CD4-positive, alpha-beta T cell (primary cell): ENCODE measurements at regions of chr2 and their contacts with region 1.

Region 1: GRCh38 chr2:156435715-156436496 is at the start of gene GPD2:
- DNase-seq: peak; percentile 25 to 77 (median 46)
- ATAC-seq: peak; percentile 63
- H3K4me3 ChIP-seq: peak within 1 kb of the TSS; percentile 80
- H3K4me3 Mint-ChIP-seq: peak within 1 kb of the TSS; percentile 96
- H3K27ac ChIP-seq: peak within 1 kb of the TSS; percentile 33 to 69
- H3K27ac Mint-ChIP-seq: peak within 1 kb of the TSS; percentile 95
- H3K4me1 ChIP-seq: peaks cover 28% of the 10 kb centered on the region
- H3K4me1 Mint-ChIP-seq: peaks cover 33% of the 10 kb centered on the region
- H3K27me3 ChIP-seq: no peaks in the 10 kb centered on the region
- H3K27me3 Mint-ChIP-seq: no peaks in the 10 kb centered on the region
- CTCF ChIP-seq: no peak
- total RNA-seq, gene GPD2: 6.2 to 6.7 TPM

Region 2: DNA sequence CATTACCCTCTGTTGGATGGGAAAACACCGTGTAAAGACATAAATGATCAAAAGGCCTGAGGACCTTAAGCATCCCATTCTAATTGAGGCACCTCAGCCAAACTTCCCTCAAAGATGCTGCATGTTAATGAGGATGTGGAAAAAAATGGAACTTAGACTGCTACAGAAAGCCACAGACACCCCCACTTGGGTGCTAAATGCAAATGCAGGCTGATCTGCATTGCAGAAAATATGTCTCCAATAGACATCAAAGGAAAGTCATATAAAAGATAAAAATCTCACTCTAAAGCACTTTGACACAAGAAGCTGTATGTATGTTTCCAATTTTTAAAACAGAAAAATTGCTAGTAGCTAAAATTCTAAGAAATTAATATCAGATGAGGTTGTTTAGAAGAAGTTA is 1232.7 kb before region 1 on chr2:
- CTCF ChIA-PET with region 1: no interaction called
- POLR2A ChIA-PET with region 1: no interaction called
- intact Hi-C with region 1: no loop called
- DNase-seq: no peak
- ATAC-seq: no peak
- H3K4me3 ChIP-seq: no peak overlapping the region
- H3K4me3 Mint-ChIP-seq: no peak overlapping the region
- H3K27ac ChIP-seq: no peak overlapping the region
- H3K27ac Mint-ChIP-seq: no peak overlapping the region
- H3K4me1 ChIP-seq: no peaks in the 10 kb centered on the region
- H3K4me1 Mint-ChIP-seq: no peaks in the 10 kb centered on the region
- H3K27me3 ChIP-seq: no peaks in the 10 kb centered on the region
- H3K27me3 Mint-ChIP-seq: no peaks in the 10 kb centered on the region
- CTCF ChIP-seq: no peak

Region 3: DNA sequence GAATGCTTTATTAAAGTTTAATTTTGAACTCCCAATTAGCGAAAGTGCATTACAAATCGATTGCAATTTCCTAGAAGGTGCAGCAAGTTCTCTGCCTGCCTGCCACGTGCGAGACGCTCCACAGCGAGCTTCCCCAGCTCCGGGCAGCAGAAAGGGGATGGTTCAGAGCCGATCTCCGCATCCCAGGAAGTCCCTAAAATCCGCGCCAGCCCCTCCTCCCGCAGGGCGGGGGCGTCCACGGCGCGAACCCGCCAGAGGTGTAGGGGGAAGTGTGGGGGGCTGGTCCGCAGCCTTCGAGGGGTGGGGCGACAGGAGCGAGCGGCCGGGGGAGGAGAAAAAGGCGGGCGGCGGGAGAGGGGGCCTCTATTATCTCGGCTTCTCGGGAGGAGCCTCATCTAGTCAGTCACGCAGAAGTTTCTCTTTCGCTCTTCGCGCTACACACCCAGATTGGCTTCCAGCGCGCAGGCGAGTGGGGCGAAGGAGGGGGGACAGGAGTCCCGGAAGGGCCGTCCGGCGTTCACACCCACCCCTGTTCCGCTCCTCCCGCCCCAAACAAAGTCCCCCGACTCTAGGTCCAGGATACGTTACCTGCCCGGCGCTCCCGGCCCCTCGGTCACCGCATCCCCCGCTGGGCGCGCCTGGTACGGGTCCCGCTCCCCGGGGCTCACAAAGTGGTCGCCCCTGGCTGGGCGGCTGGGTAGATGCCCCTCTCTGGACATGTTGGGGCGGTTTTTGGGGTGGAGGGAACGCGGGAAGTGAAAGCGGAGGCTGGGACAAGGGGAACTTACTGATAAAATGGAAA is 94.3 kb before region 1 on chr2:
- CTCF ChIA-PET with region 1: interaction called, 3 read pairs
- POLR2A ChIA-PET with region 1: interaction called, 50 read pairs
- intact Hi-C with region 1: loop called in 1 of 2 experiments (anchors 5 kb)
- DNase-seq: peak; percentile 72 to 95 (median 81)
- ATAC-seq: peak; percentile 74
- H3K4me3 ChIP-seq: peak overlapping the region; percentile 87
- H3K4me3 Mint-ChIP-seq: peak overlapping the region; percentile 99
- H3K27ac ChIP-seq: peak overlapping the region; percentile 99
- H3K27ac Mint-ChIP-seq: peak overlapping the region; percentile 98
- H3K4me1 ChIP-seq: peaks cover 9% of the 10 kb centered on the region
- H3K4me1 Mint-ChIP-seq: peaks cover 49% of the 10 kb centered on the region
- H3K27me3 ChIP-seq: no peaks in the 10 kb centered on the region
- H3K27me3 Mint-ChIP-seq: no peaks in the 10 kb centered on the region
- CTCF ChIP-seq: no peak

Region 4: GRCh38 chr2:156349605-156350004 is 86.3 kb before region 1 on chr2:
- CTCF ChIA-PET with region 1: no interaction called
- POLR2A ChIA-PET with region 1: interaction called, 5 read pairs
- intact Hi-C with region 1: loop called in 1 of 2 experiments (anchors 5 kb)
- DNase-seq: no peak
- ATAC-seq: no peak
- H3K4me3 ChIP-seq: no peak overlapping the region
- H3K4me3 Mint-ChIP-seq: no peak overlapping the region
- H3K27ac ChIP-seq: no peak overlapping the region
- H3K27ac Mint-ChIP-seq: no peak overlapping the region
- H3K4me1 ChIP-seq: no peaks in the 10 kb centered on the region
- H3K4me1 Mint-ChIP-seq: peaks cover 3% of the 10 kb centered on the region
- H3K27me3 ChIP-seq: no peaks in the 10 kb centered on the region
- H3K27me3 Mint-ChIP-seq: no peaks in the 10 kb centered on the region
- CTCF ChIP-seq: no peak

Region 5: GRCh38 chr2:156363141-156363540 is 72.8 kb before region 1 on chr2:
- CTCF ChIA-PET with region 1: no interaction called
- POLR2A ChIA-PET with region 1: no interaction called
- intact Hi-C with region 1: no loop called
- DNase-seq: no peak
- ATAC-seq: no peak
- H3K4me3 ChIP-seq: no peak overlapping the region
- H3K4me3 Mint-ChIP-seq: no peak overlapping the region
- H3K27ac ChIP-seq: no peak overlapping the region
- H3K27ac Mint-ChIP-seq: no peak overlapping the region
- H3K4me1 ChIP-seq: no peaks in the 10 kb centered on the region
- H3K4me1 Mint-ChIP-seq: no peaks in the 10 kb centered on the region
- H3K27me3 ChIP-seq: no peaks in the 10 kb centered on the region
- H3K27me3 Mint-ChIP-seq: no peaks in the 10 kb centered on the region
- CTCF ChIP-seq: no peak